Colonic mucosa (tissue), 4 donors: ENCODE measurements at regions of chr1 and their contacts with region 1.

Region 1: GRCh38 chr1:32335790-32336590 is at the start of gene MARCKSL1:
- DNase-seq: peak; percentile 85
- H3K4me3 ChIP-seq: peak within 1 kb of the TSS; percentile 68
- H3K27ac ChIP-seq: peak within 1 kb of the TSS; percentile 56
- H3K4me1 ChIP-seq: peaks cover 36% of the 10 kb centered on the region
- H3K27me3 ChIP-seq: no peaks in the 10 kb centered on the region
- CTCF ChIP-seq: no peak
- total RNA-seq, gene MARCKSL1: 174 to 199 TPM

Region 2: DNA sequence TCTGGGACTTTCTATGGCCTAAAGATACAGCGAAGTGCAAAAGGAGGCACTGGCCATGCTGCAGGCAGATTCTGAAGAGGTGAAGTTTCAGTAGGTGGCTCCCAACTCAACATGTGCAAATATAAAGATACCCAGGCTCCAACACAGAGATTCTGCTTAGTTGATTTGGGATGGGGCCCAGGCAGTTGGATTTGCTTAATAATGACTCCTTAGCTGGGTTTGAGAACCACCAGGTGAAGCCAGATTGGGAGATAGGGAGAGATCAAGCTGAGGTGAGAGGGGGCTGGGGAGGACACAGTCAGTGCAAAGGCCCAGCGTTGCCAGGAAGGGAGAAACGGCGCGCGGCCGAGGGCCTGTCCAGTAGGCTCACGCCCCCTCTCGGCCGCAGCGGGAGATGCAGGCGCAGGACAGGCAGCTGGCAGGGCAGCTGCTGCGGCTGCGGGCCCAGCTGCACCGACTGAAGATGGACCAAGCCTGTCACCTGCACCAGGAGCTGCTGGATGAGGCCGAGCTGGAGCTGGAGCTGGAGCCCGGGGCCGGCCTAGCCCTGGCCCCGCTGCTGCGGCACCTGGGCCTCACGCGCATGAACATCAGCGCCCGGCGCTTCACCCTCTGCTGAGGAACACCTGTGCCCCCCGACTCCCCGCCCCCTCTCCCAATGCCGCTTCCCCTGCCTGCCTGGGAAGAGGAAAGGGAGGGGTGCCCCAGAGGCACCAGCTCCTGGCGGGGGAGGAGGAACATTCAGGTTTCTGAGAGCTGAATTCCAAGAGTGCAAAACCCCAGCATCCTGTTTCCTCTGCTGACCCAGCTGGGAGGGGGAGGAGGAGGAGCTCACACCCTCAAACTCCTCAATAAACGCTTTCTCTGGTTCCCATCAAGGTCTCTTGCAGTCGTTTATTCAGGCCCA is 87.8 kb before region 1 on chr1:
- intact Hi-C with region 1: loop called (anchors 10 kb)
- DNase-seq: peak; percentile 93
- H3K4me3 ChIP-seq: no peak overlapping the region
- H3K27ac ChIP-seq: peak overlapping the region; percentile 63
- H3K4me1 ChIP-seq: peaks cover 10% of the 10 kb centered on the region
- H3K27me3 ChIP-seq: no peaks in the 10 kb centered on the region
- CTCF ChIP-seq: peak; percentile 84

Region 3: GRCh38 chr1:32266921-32267591 is 68.9 kb before region 1 on chr1:
- intact Hi-C with region 1: no loop called
- DNase-seq: no peak
- H3K4me3 ChIP-seq: no peak overlapping the region
- H3K27ac ChIP-seq: no peak overlapping the region
- H3K4me1 ChIP-seq: no peaks in the 10 kb centered on the region
- H3K27me3 ChIP-seq: no peaks in the 10 kb centered on the region
- CTCF ChIP-seq: no peak